ENCODE measurements at regions of chr1 and their contacts with region 1.

Region 1: DNA sequence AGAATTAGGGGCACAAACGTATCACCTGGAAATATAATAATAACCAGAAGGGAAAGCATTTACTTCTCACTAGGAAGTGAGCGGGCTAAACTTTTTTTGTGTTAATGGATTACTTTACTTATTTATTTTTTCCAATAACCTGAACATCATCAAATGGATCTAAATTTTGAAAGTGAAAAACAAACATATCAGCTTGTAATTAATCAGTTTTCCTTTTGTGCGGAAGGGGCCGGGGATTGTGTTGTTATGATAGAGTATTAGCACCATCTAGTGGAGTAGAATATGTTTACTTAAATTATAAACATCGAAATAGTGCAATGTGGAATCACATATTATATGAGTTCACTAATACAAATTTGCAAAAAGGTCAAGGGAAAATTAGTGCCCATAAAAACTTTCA is 9.0 kb downstream of the CFH start:
- DNase-seq: no peak
- ATAC-seq: peak; percentile 49
- H3K4me3 Mint-ChIP-seq: no peak overlapping the region
- H3K27ac Mint-ChIP-seq: no peak overlapping the region
- H3K4me1 Mint-ChIP-seq: no peaks in the 10 kb centered on the region
- H3K27me3 Mint-ChIP-seq: no peaks in the 10 kb centered on the region

Region 2: GRCh38 chr1:196148367-196148970 is 512.4 kb before region 1 on chr1:
- CTCF ChIA-PET with region 1: interaction called, 22 read pairs
- POLR2A ChIA-PET with region 1: no interaction called
- DNase-seq: no peak
- ATAC-seq: no peak
- H3K4me3 Mint-ChIP-seq: no peak overlapping the region
- H3K27ac Mint-ChIP-seq: no peak overlapping the region
- H3K4me1 Mint-ChIP-seq: no peaks in the 10 kb centered on the region
- H3K27me3 Mint-ChIP-seq: no peaks in the 10 kb centered on the region

Measured in activated CD8-positive, alpha-beta T cell treated with anti-CD3 and anti-CD28 coated beads, Interleukin-2, amount 10 ng/mL, durations not matched to agents 7 days and 5 days (primary cell).